Activated CD8-positive, alpha-beta T cell treated with anti-CD3 and anti-CD28 coated beads for 36 hours (primary cell): ENCODE measurements at regions of chr5 and their contacts with region 1.

Region 1: GRCh38 chr5:88889189-88890069 is 6.4 kb upstream of the MEF2C start:
- DNase-seq: no peak
- ATAC-seq: no peak
- H3K4me3 Mint-ChIP-seq: peak overlapping the region; percentile 17
- H3K27ac Mint-ChIP-seq: no peak overlapping the region
- H3K4me1 Mint-ChIP-seq: peaks cover 4% of the 10 kb centered on the region
- H3K27me3 Mint-ChIP-seq: peaks cover 49% of the 10 kb centered on the region
- CTCF ChIP-seq: no peak

Region 2: DNA sequence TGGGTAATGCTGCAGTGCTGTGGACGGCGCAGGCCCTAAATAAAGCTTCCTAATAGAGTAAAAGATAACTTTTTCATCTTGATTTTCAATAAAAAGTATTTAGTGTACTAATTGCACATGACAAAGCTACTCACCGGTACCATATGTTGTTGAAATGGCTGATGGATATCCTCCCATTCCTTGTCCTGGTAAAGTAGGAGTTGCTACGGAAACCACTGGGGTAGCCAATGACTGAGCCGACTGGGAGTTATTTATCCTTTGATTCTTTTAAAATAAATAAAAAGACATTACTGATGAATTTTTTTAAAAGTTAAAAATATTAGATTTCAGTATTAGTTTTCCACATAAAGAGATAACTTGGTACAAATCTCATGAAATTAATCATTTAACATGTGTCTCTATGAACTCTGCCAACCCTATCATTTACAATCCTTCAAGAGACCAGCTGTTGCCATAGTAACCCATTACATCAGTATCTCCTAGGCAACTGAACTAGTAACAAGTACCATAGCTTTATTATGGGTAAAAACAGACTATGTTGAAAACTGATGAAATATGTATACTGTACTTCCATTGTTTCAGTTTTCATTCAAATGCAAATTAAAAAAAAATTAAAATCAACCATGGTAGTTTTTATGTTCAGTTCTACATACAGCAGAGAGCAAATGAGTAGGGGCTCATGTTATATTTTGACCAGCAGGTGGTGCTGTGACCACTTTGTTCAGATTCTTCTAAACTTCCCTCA is 160.2 kb before region 1 on chr5:
- CTCF ChIA-PET with region 1: interaction called, 13 read pairs
- POLR2A ChIA-PET with region 1: no interaction called
- intact Hi-C with region 1: no loop called
- DNase-seq: peak; percentile 76
- ATAC-seq: peak; percentile 71
- H3K4me3 Mint-ChIP-seq: no peak overlapping the region
- H3K27ac Mint-ChIP-seq: no peak overlapping the region
- H3K4me1 Mint-ChIP-seq: peaks cover 5% of the 10 kb centered on the region
- H3K27me3 Mint-ChIP-seq: peaks cover 10% of the 10 kb centered on the region
- CTCF ChIP-seq: peak; percentile 80

Region 3: DNA sequence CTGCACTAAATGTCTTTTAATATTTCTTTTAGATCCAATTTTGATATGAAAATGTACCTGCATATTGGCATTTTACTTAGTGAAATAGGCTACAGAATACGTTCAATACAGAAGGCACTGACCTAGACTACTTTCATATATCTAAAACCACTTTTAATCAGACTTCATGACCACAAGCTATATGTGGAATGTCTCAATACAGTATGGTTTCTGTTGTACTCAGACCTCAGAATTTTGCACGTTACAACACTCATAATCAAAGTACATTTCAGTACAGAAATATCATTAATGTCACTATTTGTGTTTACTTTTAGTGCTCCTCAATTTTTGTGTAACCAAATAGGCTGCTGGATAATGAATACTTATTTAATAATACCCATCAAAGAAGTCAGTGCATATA is 81.3 kb before region 1 on chr5:
- CTCF ChIA-PET with region 1: no interaction called
- POLR2A ChIA-PET with region 1: no interaction called
- intact Hi-C with region 1: no loop called
- DNase-seq: no peak
- ATAC-seq: no peak
- H3K4me3 Mint-ChIP-seq: no peak overlapping the region
- H3K27ac Mint-ChIP-seq: no peak overlapping the region
- H3K4me1 Mint-ChIP-seq: peaks cover 2% of the 10 kb centered on the region
- H3K27me3 Mint-ChIP-seq: peaks cover 10% of the 10 kb centered on the region
- CTCF ChIP-seq: no peak